RWPE1 (cell line): ENCODE measurements at regions of chr18 and their contacts with region 1.

Region 1: DNA sequence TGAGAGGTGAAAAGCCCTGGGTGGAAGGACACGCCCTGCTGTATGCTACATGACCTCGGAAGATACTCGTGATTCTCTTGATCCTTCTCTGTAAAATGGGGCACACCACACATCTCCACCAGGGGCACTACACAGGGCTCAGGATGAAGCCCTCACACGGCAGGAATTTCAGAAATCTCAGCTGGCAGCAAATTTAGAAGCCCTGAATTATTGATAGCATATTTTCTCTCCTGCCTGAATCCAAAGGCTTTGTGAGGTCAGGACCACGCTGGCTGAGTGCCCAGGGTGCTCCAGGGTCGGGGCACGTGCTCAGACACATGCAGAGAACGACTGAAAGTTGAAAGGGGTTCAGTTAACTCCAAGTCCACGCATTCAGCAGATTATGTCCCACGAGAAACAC is 42.1 kb upstream of the GALR1 start:
- DNase-seq: peak; percentile 20
- H3K27ac ChIP-seq: no peak overlapping the region
- CTCF ChIP-seq: peak; percentile 34

Region 2: DNA sequence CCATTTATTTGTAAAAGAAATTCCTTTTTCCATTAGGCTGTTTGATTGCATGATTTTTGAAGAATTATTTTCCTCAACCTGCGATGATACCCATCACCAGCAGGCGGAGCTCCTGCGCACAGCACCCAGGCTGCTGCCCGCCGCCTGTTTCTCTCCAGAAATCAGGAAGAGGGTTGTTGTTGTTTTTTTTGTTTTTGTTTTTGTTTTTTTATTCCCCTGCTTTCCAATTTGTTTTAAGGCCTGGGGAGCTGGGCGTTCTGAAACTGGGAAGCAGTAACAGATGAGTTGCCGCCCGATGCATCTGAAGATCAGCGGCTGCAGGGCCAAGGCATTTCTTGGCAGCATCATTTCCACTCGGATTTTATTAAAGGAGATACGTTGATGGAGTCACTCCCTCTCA is 207.0 kb before region 1 on chr18:
- CTCF ChIA-PET with region 1: interaction called, 10 read pairs
- POLR2A ChIA-PET with region 1: no interaction called
- DNase-seq: peak; percentile 53
- H3K27ac ChIP-seq: no peak overlapping the region
- CTCF ChIP-seq: peak; percentile 100

Region 3: DNA sequence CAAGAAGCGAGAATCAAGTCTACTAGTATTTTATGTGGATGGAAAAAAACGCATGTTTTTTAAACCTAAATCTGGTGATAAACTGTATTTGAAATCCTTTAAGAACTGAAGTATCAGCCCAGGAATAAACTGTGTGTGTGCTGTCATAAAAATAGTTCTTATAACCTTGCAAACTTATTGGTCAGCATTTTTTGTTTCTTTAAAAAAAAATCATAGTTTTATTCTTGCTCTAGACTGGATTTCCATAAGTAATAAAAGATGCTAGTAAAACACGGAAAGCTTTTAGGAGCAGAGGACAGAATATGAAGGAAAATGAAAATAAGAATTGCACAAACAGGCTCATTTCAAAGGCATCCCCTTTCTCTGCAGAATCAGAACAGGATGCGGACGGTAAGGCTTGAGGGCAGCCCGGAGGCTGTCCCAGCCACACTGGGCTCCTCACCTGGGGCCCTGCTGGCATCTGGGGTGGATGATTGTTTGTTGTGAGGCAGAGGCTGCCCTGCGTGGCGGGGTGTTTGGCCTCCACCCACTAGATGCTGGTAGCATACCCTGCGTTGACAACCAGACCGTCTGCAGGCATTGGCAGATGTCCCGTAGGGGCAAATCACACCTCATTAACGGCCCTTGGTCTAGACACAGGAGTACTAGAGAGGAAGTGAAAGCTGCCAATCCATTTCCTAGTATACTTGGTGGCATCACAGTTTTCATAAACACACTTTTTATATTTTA is 127.4 kb before region 1 on chr18:
- CTCF ChIA-PET with region 1: no interaction called
- POLR2A ChIA-PET with region 1: no interaction called
- DNase-seq: no peak
- H3K27ac ChIP-seq: peak overlapping the region; percentile 13; the same call in 1 of the 2 replicates
- CTCF ChIP-seq: no peak